IMR-90 (cell line): ENCODE measurements at regions of chr15 and their contacts with region 1.

Region 1: DNA sequence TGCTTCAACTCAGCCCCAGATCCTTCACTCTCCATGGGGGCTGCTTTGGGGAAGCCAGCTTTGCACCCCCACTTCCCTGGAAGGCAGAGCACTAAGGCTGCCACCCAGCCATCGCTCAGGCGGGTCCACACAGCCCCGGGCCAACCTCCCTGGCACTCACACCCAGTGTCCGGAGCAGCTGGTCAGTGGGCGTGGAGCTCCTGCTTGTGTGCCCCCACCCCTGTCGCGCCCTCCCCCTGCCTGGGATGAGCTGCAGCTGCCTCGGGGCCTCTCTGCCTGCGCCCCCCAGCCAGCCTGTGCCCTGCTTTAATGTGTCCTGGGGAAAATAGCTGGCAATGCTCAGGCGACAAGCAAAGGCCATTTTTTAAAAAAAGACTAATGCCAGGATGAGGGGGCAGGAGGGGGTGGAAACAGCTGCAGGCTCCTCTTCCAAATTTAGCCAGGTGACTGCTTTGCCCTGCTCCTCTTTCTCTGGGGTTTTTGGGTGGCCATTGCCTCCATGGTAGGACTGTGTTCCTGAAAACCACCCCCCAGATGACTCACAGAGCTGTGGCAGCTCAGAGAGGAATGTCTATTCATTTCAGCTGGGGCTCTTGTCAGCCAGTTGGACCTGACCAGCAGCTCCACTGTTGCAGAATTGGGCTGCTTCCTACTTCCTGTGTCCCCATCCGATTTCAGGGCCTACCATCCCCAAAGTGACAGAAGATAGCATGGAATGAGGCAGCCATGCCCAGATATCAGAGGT is 65.0 kb downstream of the CEMIP start:
- DNase-seq: peak; percentile 64
- ATAC-seq: peak; percentile 30
- H3K4me3 ChIP-seq: no peak overlapping the region
- H3K27ac ChIP-seq: no peak overlapping the region
- H3K4me1 ChIP-seq: peaks cover 3% of the 10 kb centered on the region; the same call in 1 of the 2 replicates
- H3K27me3 ChIP-seq: no peaks in the 10 kb centered on the region
- CTCF ChIP-seq: no peak
- POLR2A ChIP-seq: no peak
- RAD21 ChIP-seq: no peak

Region 2: DNA sequence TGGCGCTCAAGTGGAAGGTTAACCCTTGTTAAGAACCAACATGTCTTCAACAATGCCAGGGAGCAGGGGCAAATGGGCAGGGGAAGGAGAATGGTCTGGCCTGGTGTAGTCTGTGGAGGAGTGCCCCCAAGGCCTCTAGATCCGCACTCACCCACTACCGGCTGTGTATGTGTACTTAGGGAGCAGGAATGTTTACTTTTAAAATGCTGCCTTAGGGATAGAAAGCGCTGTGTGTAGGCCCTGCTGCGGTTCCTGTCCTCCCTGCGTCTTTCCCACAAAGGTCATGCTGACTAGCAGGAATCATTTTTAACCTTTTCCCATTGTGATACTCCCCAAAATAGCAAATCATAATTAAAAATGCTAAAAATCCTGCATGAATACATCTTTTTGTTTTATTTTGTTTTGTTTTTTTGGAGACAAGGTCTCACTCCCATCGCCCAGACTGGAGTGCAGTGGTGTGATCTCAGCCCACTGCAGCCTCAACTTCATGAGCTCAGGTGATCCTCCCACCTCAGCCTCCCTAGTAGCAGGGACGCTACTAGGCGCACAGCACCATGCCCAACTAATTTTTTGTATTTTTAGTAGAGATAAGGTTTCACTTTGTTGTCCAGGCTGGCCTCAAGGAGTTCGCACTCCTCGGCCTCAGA is 100.9 kb before region 1 on chr15:
- CTCF ChIA-PET with region 1: no interaction called
- POLR2A ChIA-PET with region 1: no interaction called
- dilution Hi-C with region 1: no loop called
- in situ Hi-C with region 1: no loop called
- intact Hi-C with region 1: no loop called
- DNase-seq: peak; percentile 57
- ATAC-seq: peak; percentile 91
- H3K4me3 ChIP-seq: no peak overlapping the region
- H3K27ac ChIP-seq: peak overlapping the region; percentile 42; the same call in 1 of the 2 replicates
- H3K4me1 ChIP-seq: peaks cover 10% of the 10 kb centered on the region
- H3K27me3 ChIP-seq: no peaks in the 10 kb centered on the region
- CTCF ChIP-seq: no peak
- POLR2A ChIP-seq: no peak
- RAD21 ChIP-seq: no peak

Region 3: GRCh38 chr15:80875568-80876347 is 31.6 kb after region 1 on chr15:
- CTCF ChIA-PET with region 1: no interaction called
- POLR2A ChIA-PET with region 1: interaction called, 13 read pairs
- dilution Hi-C with region 1: no loop called
- in situ Hi-C with region 1: no loop called
- intact Hi-C with region 1: no loop called
- DNase-seq: no peak
- ATAC-seq: no peak
- H3K4me3 ChIP-seq: no peak overlapping the region
- H3K27ac ChIP-seq: no peak overlapping the region
- H3K4me1 ChIP-seq: peaks cover 14% of the 10 kb centered on the region
- H3K27me3 ChIP-seq: no peaks in the 10 kb centered on the region
- CTCF ChIP-seq: no peak
- POLR2A ChIP-seq: no peak
- RAD21 ChIP-seq: no peak

Region 4: DNA sequence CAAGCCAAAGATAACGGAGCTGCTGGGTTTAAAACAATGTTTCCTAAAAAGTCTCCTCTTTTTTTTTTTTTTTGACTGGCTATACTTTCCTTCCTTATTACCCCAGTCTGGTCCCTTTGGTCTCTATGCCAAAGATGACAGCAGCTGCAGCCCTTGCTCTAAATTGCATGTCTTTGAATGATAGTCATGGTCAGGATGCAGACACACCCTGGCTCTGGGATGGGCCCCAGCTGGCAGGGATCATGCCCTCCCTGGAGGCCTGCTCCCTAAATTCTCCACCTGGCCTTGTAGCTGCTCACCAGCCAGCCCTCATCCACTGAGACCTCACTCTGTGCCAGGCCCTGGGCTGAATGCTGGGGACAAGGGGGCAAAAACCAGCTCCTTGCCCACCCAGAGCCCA is 49.6 kb after region 1 on chr15:
- CTCF ChIA-PET with region 1: no interaction called
- POLR2A ChIA-PET with region 1: no interaction called
- dilution Hi-C with region 1: no loop called
- in situ Hi-C with region 1: loop called (anchors 5 kb)
- intact Hi-C with region 1: no loop called
- DNase-seq: no peak
- ATAC-seq: no peak
- H3K4me3 ChIP-seq: no peak overlapping the region
- H3K27ac ChIP-seq: no peak overlapping the region
- H3K4me1 ChIP-seq: peaks cover 4% of the 10 kb centered on the region
- H3K27me3 ChIP-seq: no peaks in the 10 kb centered on the region
- CTCF ChIP-seq: no peak
- POLR2A ChIP-seq: no peak
- RAD21 ChIP-seq: no peak

Region 5: DNA sequence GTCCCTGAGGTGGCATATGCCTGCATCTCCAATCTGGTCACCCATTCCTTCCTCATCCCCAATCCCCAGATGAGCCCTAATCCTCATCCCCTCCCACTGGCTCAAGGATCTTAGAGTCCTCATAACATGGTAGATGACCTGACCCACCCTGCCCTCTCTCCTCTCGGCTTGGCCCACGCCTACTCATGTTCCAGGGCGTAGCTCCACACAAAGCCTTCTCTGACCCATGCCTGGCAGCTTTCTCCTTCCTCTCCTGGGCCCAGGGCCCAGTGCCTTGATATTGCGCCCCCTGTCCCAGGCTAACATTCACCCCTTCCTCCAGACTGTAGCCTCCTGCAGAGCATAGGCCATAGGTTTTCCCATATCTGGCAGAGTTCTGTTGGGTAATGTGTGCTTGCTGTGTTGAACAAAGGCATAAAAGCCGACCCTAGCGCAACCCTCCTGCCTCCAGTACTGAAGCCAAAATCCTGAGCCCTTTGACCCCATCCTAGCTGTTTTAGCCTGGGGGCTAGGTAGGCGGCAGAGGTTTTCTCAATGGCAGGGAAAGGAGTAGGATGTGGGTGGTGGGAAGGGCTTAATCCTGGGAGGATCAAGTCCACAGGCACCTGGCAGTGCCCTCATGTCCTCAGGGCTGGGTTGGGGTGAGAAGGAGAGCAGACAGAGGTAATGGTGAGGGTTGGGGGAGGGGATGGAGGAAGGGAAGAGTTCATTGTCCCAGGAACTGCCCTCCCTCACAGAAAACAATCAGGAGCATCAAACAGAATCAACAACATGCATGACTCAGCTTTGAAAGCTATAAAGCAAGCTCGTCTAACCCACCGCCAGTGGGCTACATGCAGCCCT is 110.0 kb after region 1 on chr15:
- CTCF ChIA-PET with region 1: no interaction called
- POLR2A ChIA-PET with region 1: no interaction called
- dilution Hi-C with region 1: no loop called
- in situ Hi-C with region 1: no loop called
- intact Hi-C with region 1: no loop called
- DNase-seq: peak; percentile 31
- ATAC-seq: peak; percentile 2
- H3K4me3 ChIP-seq: no peak overlapping the region
- H3K27ac ChIP-seq: no peak overlapping the region
- H3K4me1 ChIP-seq: peaks cover 9% of the 10 kb centered on the region
- H3K27me3 ChIP-seq: no peaks in the 10 kb centered on the region
- CTCF ChIP-seq: no peak
- POLR2A ChIP-seq: no peak
- RAD21 ChIP-seq: no peak